Gastrocnemius medialis (tissue), 4 donors: ENCODE measurements at regions of chr2 and their contacts with region 1.

Region 1: GRCh38 chr2:176814306-176815052 is 398.1 kb upstream of the HNRNPA3 start:
- DNase-seq: no peak
- ATAC-seq: no peak
- H3K4me3 ChIP-seq: no peak overlapping the region
- H3K27ac ChIP-seq: no peak overlapping the region
- H3K4me1 ChIP-seq: peaks cover 0 to 3% of the 10 kb centered on the region in 2 donors
- H3K27me3 ChIP-seq: no peaks in the 10 kb centered on the region
- CTCF ChIP-seq: peak in 3 of 5 experiments; percentile 32 to 73 (median 60)
- POLR2A ChIP-seq: no peak

Region 2: GRCh38 chr2:176110975-176111663 is 703.4 kb before region 1 on chr2:
- in situ Hi-C with region 1: loop called in 2 of 4 experiments (anchors 25 kb)
- intact Hi-C with region 1: no loop called
- DNase-seq: no peak
- ATAC-seq: no peak
- H3K4me3 ChIP-seq: no peak overlapping the region
- H3K27ac ChIP-seq: no peak overlapping the region
- H3K4me1 ChIP-seq: peaks cover 6 to 13% of the 10 kb centered on the region in 2 donors
- H3K27me3 ChIP-seq: peaks cover 93 to 96% (median 96%) of the 10 kb centered on the region in 3 donors
- CTCF ChIP-seq: peak in 3 of 5 experiments; percentile 46 to 66 (median 58)
- POLR2A ChIP-seq: no peak

Region 3: GRCh38 chr2:176653479-176654443 is 160.7 kb before region 1 on chr2:
- in situ Hi-C with region 1: loop called in 1 of 4 experiments (anchors 10 kb)
- intact Hi-C with region 1: no loop called
- DNase-seq: peak; percentile 20 to 45
- ATAC-seq: peak; percentile 54 to 81
- H3K4me3 ChIP-seq: no peak overlapping the region
- H3K27ac ChIP-seq: no peak overlapping the region
- H3K4me1 ChIP-seq: no peaks in the 10 kb centered on the region
- H3K27me3 ChIP-seq: peaks cover 0 to 3% (median 0%) of the 10 kb centered on the region in 3 donors
- CTCF ChIP-seq: peak in 4 of 5 experiments; percentile 32 to 71 (median 57)
- POLR2A ChIP-seq: no peak

Region 4: GRCh38 chr2:177084607-177085006 is 270.1 kb after region 1 on chr2:
- in situ Hi-C with region 1: no loop called
- intact Hi-C with region 1: no loop called
- DNase-seq: no peak
- ATAC-seq: no peak
- H3K4me3 ChIP-seq: no peak overlapping the region
- H3K27ac ChIP-seq: no peak overlapping the region
- H3K4me1 ChIP-seq: no peaks in the 10 kb centered on the region
- H3K27me3 ChIP-seq: no peaks in the 10 kb centered on the region
- CTCF ChIP-seq: no peak
- POLR2A ChIP-seq: no peak